HAP-1 (cell line): ENCODE measurements at regions of chr6 and their contacts with region 1.

Region 1: GRCh38 chr6:166156942-166157341 is 10.7 kb downstream of the TBXT start:
- DNase-seq: no peak
- H3K4me3 ChIP-seq: no peak overlapping the region
- H3K4me1 ChIP-seq: no peaks in the 10 kb centered on the region
- H3K27me3 ChIP-seq: no peaks in the 10 kb centered on the region

Region 2: GRCh38 chr6:166419286-166419685 is 262.3 kb after region 1 on chr6:
- in situ Hi-C with region 1: loop called (anchors 25 kb)
- DNase-seq: no peak
- H3K4me3 ChIP-seq: no peak overlapping the region
- H3K4me1 ChIP-seq: no peaks in the 10 kb centered on the region
- H3K27me3 ChIP-seq: no peaks in the 10 kb centered on the region